ENCODE measurements at regions of chr9 and their contacts with region 1.

Region 1: DNA sequence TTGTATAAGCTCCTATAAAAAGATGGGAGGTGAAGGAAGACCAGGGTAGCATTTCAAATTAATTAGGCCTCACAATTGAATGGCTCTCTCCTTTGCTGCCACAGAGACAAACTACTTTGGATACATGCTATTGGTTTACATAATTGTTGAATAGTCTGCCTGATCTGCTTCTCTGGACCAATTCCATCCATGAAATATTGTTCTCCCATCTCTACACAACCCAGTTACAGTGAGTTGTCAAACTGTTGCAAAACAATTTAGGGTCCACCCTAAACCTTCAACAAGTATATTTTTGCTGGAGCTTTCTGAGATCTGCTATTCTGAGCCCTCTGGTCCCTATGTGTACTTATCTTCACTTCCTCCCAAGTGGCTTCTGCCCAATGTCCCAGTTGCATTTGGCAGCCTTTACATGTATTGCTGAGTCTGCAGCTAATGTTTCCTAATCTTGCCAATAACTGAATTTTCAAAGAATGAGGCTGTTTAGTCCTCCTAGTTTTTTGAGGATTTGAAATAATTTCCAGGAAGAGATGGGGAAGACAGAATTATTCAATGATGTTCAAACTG is 38.9 kb downstream of the AGTPBP1 start:
- DNase-seq: no peak
- ATAC-seq: no peak
- H3K4me3 ChIP-seq: no peak overlapping the region
- H3K4me3 Mint-ChIP-seq: no peak overlapping the region
- H3K27ac ChIP-seq: no peak overlapping the region
- H3K27ac Mint-ChIP-seq: peak overlapping the region in 1 of 2 donors; percentile 41
- H3K4me1 ChIP-seq: no peaks in the 10 kb centered on the region
- H3K4me1 Mint-ChIP-seq: peaks cover 37 to 41% (median 40%) of the 10 kb centered on the region in 3 donors
- H3K27me3 ChIP-seq: no peaks in the 10 kb centered on the region
- H3K27me3 Mint-ChIP-seq: no peaks in the 10 kb centered on the region

Region 2: DNA sequence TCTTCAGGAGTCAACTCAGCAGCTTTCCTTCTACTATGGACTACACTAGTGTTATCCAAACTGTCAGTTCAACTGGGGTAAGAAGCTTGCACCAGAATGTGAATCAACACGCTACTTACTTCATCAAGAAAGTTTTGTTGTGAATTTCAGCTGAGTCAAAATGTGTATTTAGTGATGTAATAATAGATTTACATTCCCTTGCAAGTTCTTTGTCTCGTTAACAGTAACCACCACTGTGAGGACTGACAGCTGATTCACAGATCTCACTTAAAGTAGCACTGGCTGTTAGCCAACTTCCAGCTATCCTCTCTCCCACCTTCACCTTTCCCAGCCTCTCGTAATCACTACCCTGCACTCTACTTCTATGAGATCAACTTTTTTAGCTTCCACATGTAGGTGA is 588.0 kb before region 1 on chr9:
- CTCF ChIA-PET with region 1: no interaction called
- POLR2A ChIA-PET with region 1: no interaction called
- DNase-seq: no peak
- ATAC-seq: no peak
- H3K4me3 ChIP-seq: no peak overlapping the region
- H3K4me3 Mint-ChIP-seq: no peak overlapping the region
- H3K27ac ChIP-seq: no peak overlapping the region
- H3K27ac Mint-ChIP-seq: no peak overlapping the region
- H3K4me1 ChIP-seq: no peaks in the 10 kb centered on the region
- H3K4me1 Mint-ChIP-seq: no peaks in the 10 kb centered on the region
- H3K27me3 ChIP-seq: no peaks in the 10 kb centered on the region
- H3K27me3 Mint-ChIP-seq: peaks cover 5 to 18% of the 10 kb centered on the region in 2 donors

Region 3: GRCh38 chr9:85741875-85742629 is 39.2 kb after region 1 on chr9 and contains the start of gene AGTPBP1:
- CTCF ChIA-PET with region 1: interaction called, 9 to 11 read pairs
- POLR2A ChIA-PET with region 1: interaction called, 3 to 7 read pairs
- DNase-seq: peak; percentile 90 to 100 (median 97)
- ATAC-seq: peak; percentile 81 to 95 (median 89)
- H3K4me3 ChIP-seq: peak within 1 kb of the TSS; percentile 84 to 91
- H3K4me3 Mint-ChIP-seq: peak within 1 kb of the TSS; percentile 91 to 95 (median 94)
- H3K27ac ChIP-seq: peak within 1 kb of the TSS; percentile 72
- H3K27ac Mint-ChIP-seq: peak within 1 kb of the TSS; percentile 92 to 98
- H3K4me1 ChIP-seq: peaks cover 9 to 11% of the 10 kb centered on the region in 2 experiments
- H3K4me1 Mint-ChIP-seq: peaks cover 38 to 46% (median 44%) of the 10 kb centered on the region in 3 donors
- H3K27me3 ChIP-seq: no peaks in the 10 kb centered on the region
- H3K27me3 Mint-ChIP-seq: peaks cover 0 to 4% of the 10 kb centered on the region in 2 donors
- total RNA-seq, gene AGTPBP1: 46.2 to 66.7 (median 52.2) TPM

Region 4: GRCh38 chr9:85863875-85864274 is 161.1 kb after region 1 on chr9:
- CTCF ChIA-PET with region 1: interaction called in 1 of 2 experiments, 11 read pairs
- POLR2A ChIA-PET with region 1: no interaction called
- DNase-seq: no peak
- ATAC-seq: no peak
- H3K4me3 ChIP-seq: no peak overlapping the region
- H3K4me3 Mint-ChIP-seq: no peak overlapping the region
- H3K27ac ChIP-seq: no peak overlapping the region
- H3K27ac Mint-ChIP-seq: no peak overlapping the region
- H3K4me1 ChIP-seq: no peaks in the 10 kb centered on the region
- H3K4me1 Mint-ChIP-seq: no peaks in the 10 kb centered on the region
- H3K27me3 ChIP-seq: no peaks in the 10 kb centered on the region
- H3K27me3 Mint-ChIP-seq: no peaks in the 10 kb centered on the region

Region 5: DNA sequence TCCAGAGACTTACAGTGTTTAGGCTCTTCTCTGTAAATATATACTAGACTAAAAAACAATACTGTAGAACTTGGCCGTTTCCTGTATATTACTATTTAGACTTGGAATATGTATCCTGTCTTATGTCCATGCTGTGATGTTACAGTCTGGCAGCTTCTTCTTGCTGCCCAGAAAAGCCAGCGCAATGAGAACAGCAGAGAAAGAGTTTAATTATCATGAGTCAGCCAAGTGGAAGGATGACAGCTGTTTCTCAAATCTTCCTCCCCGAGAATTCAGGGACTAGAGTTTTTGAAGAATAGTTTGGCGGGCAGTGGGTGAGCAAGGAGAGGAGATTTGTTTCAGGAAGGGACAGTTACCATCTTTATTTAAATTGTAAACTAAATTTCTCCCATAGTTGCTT is 275.7 kb after region 1 on chr9:
- CTCF ChIA-PET with region 1: no interaction called
- POLR2A ChIA-PET with region 1: no interaction called
- DNase-seq: no peak
- ATAC-seq: no peak
- H3K4me3 ChIP-seq: no peak overlapping the region
- H3K4me3 Mint-ChIP-seq: no peak overlapping the region
- H3K27ac ChIP-seq: no peak overlapping the region
- H3K27ac Mint-ChIP-seq: peak overlapping the region in 1 of 2 donors; percentile 24
- H3K4me1 ChIP-seq: no peaks in the 10 kb centered on the region
- H3K4me1 Mint-ChIP-seq: no peaks in the 10 kb centered on the region
- H3K27me3 ChIP-seq: no peaks in the 10 kb centered on the region
- H3K27me3 Mint-ChIP-seq: no peaks in the 10 kb centered on the region

Region 6: DNA sequence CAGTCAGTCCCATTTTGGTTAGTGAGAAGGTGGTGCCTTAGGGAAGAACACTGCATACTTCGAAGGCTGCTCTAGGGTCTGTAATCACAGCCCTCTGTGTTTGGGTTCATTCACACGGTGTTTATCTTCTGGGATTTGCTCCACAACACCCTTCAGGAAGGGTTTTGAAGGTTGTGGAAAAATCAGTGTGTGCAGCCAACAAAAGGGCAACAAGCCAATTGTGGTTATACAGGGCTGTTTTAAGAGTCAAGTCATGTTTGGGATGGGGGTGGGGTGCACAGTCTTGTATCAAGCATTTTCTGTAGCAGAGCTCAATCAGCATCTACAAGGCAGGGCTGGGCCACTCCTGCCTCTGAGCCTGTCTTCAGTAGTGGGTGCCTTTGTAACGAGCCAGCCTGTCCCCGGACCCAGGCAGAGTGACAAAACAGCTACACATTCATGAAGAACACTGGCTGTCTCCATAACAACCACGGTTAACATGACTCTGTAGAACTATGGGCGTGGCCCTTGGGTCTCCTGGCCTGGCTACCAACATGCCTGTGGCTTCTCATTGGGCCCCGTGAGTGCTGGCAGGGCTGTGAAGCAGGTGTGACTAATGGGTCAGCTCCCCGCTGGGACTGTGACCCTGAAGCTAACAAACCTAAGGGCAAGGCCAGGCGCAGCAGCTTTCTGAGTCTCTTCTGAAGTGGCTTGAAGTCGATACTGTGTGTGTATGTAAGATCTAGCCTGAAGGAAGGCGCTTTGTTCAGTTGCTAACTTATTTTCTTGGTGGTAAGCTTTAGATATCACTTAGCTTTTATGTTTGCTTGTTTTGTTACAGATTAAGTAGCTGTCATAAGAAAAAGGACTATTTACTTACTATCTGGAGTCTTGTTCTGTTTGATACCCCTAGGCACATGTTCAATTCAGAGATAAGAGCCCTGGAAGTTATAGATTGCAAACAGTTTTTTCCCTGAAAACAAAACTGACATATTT is 424.5 kb after region 1 on chr9:
- CTCF ChIA-PET with region 1: no interaction called
- POLR2A ChIA-PET with region 1: no interaction called
- DNase-seq: no peak
- ATAC-seq: no peak
- H3K4me3 ChIP-seq: no peak overlapping the region
- H3K4me3 Mint-ChIP-seq: no peak overlapping the region
- H3K27ac ChIP-seq: no peak overlapping the region
- H3K27ac Mint-ChIP-seq: no peak overlapping the region
- H3K4me1 ChIP-seq: no peaks in the 10 kb centered on the region
- H3K4me1 Mint-ChIP-seq: no peaks in the 10 kb centered on the region
- H3K27me3 ChIP-seq: peaks cover 0 to 6% of the 10 kb centered on the region in 2 experiments
- H3K27me3 Mint-ChIP-seq: peaks cover 0 to 11% of the 10 kb centered on the region in 2 donors

Measured in T-cell (primary cell).